Ascending aorta (tissue), 2 donors: ENCODE measurements at regions of chr15 and their contacts with region 1.

Region 1: GRCh38 chr15:93072411-93073394 is 16.3 kb downstream of the RGMA start:
- DNase-seq: peak in 1 of 2 donors; percentile 88
- H3K4me3 ChIP-seq: peak overlapping the region; percentile 81 to 91
- H3K27ac ChIP-seq: peak overlapping the region; percentile 84 to 86
- H3K4me1 ChIP-seq: peaks cover 2 to 21% of the 10 kb centered on the region in 2 donors
- H3K27me3 ChIP-seq: no peaks in the 10 kb centered on the region
- CTCF ChIP-seq: peak in 1 of 3 experiments; percentile 4

Region 2: DNA sequence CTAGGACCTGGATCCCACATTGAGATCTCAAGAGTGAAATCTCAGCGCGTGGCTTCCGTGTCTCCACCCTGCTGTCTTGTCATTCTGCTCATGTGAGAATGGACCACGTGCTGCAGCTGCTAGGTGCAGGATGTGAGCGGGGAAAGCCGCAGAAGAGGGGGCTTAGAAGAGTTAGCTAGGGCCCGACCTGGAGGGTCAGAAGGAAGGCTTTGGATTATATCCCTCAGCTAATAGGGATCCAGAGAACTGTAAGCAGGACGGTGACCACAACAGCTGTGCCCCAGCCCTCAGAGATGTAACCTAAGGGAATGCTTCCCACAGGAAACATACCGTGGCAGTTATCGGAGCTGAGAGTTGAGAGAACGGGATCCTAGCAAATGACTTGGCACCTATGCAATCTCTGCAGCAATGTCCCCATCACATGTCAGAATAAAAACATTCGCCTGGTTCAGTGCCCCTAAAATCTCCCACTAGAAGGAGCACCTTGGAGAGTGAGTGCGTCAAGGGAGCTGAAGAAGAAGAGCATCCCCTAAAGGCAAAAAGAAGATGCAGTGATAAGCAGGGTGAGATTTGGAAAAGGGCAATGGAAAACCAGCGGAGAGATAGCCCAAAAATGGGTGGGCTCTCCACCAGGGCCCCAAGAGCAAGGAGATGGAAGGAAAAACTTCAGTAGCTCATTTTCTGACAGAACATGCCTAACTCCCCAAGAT is 756.0 kb before region 1 on chr15:
- intact Hi-C with region 1: no loop called
- DNase-seq: no peak
- H3K4me3 ChIP-seq: no peak overlapping the region
- H3K27ac ChIP-seq: no peak overlapping the region
- H3K4me1 ChIP-seq: no peaks in the 10 kb centered on the region
- H3K27me3 ChIP-seq: no peaks in the 10 kb centered on the region
- CTCF ChIP-seq: no peak

Region 3: GRCh38 chr15:92655178-92655995 is 417.3 kb before region 1 on chr15 and contains the start of gene FAM174B:
- intact Hi-C with region 1: no loop called
- DNase-seq: no peak
- H3K4me3 ChIP-seq: peak within 1 kb of the TSS; percentile 61 to 83
- H3K27ac ChIP-seq: peak within 1 kb of the TSS in 1 of 2 donors; percentile 35
- H3K4me1 ChIP-seq: peaks cover 0 to 3% of the 10 kb centered on the region in 2 donors
- H3K27me3 ChIP-seq: no peaks in the 10 kb centered on the region
- CTCF ChIP-seq: no peak
- total RNA-seq, gene FAM174B: 5.2 TPM

Region 4: GRCh38 chr15:92803847-92804609 is 268.7 kb before region 1 on chr15:
- intact Hi-C with region 1: loop called (anchors 5 kb)
- DNase-seq: peak; percentile 81 to 95
- H3K4me3 ChIP-seq: no peak overlapping the region
- H3K27ac ChIP-seq: peak overlapping the region; percentile 89
- H3K4me1 ChIP-seq: peaks cover 14 to 48% of the 10 kb centered on the region in 2 donors
- H3K27me3 ChIP-seq: no peaks in the 10 kb centered on the region
- CTCF ChIP-seq: no peak

Region 5: DNA sequence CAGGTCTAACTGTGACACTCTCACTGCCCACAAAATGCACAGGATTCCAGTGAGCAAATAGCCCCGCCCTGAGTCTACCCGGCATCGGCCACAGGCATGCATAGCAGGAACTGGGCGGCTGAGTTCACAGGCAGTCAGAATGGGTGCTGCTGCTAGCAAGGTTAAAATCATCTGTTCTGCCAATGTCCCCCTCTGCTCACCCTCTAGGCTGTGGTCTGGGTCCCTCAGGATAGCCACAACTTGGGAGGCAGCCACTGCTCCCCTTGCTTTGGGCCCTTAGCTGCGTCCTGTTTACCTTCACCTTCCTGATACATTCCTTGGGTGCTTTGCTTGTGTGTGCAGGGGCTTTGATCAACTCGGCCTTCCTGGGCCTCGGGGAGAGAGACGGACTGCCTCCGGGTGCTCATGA is 249.2 kb after region 1 on chr15:
- intact Hi-C with region 1: loop called (anchors 5 kb)
- DNase-seq: no peak
- H3K4me3 ChIP-seq: no peak overlapping the region
- H3K27ac ChIP-seq: no peak overlapping the region
- H3K4me1 ChIP-seq: no peaks in the 10 kb centered on the region
- H3K27me3 ChIP-seq: no peaks in the 10 kb centered on the region
- CTCF ChIP-seq: no peak